Esophagus squamous epithelium (tissue), 5 donors: ENCODE measurements at regions of chr1 and their contacts with region 1.

Region 1: GRCh38 chr1:24830680-24831272 is 85.5 kb downstream of the CLIC4 start:
- DNase-seq: no peak
- H3K4me3 ChIP-seq: no peak overlapping the region
- H3K27ac ChIP-seq: no peak overlapping the region
- H3K4me1 ChIP-seq: peaks cover 0 to 60% (median 19%) of the 10 kb centered on the region in 3 donors
- H3K27me3 ChIP-seq: no peaks in the 10 kb centered on the region
- CTCF ChIP-seq: peak; percentile 54 to 84 (median 76)
- POLR2A ChIP-seq: no peak

Region 2: DNA sequence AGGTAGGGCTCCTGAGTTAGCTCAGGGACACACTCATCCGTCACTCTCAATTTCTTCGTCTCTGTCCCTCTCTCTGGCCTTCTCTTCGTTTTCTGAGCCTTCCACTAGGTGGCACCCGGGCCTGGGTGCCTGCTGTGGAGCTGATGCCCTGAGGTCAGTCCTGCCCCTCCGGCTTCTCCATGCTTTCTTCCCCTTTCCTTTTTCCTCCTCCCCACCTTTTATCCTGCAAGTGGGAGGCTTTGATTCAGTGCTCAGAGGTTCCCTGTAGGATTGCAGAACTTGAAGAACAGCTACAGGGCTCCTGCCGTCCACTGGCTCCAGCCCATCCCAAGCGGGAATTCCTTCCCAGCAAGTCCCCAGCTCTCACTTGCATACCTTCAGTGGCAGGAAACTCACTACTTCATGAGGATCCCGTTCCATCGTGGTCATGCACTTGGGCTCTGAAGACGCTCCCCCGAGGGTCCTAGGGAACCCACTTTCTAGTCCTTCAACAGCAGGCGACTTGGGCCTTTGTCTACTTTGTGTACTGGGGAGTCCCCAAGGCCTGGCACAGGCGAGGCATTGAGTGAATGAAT is 142.1 kb before region 1 on chr1:
- intact Hi-C with region 1: loop called (anchors 5 kb)
- DNase-seq: no peak
- H3K4me3 ChIP-seq: no peak overlapping the region
- H3K27ac ChIP-seq: no peak overlapping the region
- H3K4me1 ChIP-seq: peaks cover 0 to 12% (median 0%) of the 10 kb centered on the region in 3 donors
- H3K27me3 ChIP-seq: no peaks in the 10 kb centered on the region
- CTCF ChIP-seq: peak; percentile 61 to 86 (median 81)
- POLR2A ChIP-seq: no peak

Region 3: DNA sequence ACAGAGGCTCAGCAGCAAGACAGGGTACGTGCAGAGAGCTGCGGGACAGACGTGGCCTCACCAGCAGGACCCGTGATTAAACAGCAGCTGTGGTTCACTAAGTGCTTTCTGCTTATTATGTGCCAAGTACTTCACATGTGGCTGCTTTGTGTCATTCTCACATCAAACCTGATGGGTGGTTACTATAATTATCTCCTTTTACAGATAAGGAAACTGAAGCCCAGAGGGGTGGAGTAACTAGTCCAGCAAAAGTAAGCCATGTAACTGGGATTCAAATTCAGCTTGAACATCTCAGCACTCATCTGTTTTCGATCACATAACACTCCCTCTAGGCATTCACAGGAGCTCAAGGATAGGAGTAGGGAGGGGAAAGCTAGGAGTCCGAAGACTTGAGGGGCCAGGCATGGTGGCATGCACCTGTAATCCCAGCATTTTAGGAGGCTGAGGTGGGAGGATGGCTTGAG is 136.4 kb before region 1 on chr1:
- intact Hi-C with region 1: loop called (anchors 5 kb)
- DNase-seq: no peak
- H3K4me3 ChIP-seq: peak overlapping the region in 1 of 4 donors; percentile 8
- H3K27ac ChIP-seq: peak overlapping the region in 2 of 4 donors; percentile 9 to 28
- H3K4me1 ChIP-seq: peaks cover 0 to 19% (median 5%) of the 10 kb centered on the region in 3 donors
- H3K27me3 ChIP-seq: no peaks in the 10 kb centered on the region
- CTCF ChIP-seq: no peak
- POLR2A ChIP-seq: no peak

Region 4: DNA sequence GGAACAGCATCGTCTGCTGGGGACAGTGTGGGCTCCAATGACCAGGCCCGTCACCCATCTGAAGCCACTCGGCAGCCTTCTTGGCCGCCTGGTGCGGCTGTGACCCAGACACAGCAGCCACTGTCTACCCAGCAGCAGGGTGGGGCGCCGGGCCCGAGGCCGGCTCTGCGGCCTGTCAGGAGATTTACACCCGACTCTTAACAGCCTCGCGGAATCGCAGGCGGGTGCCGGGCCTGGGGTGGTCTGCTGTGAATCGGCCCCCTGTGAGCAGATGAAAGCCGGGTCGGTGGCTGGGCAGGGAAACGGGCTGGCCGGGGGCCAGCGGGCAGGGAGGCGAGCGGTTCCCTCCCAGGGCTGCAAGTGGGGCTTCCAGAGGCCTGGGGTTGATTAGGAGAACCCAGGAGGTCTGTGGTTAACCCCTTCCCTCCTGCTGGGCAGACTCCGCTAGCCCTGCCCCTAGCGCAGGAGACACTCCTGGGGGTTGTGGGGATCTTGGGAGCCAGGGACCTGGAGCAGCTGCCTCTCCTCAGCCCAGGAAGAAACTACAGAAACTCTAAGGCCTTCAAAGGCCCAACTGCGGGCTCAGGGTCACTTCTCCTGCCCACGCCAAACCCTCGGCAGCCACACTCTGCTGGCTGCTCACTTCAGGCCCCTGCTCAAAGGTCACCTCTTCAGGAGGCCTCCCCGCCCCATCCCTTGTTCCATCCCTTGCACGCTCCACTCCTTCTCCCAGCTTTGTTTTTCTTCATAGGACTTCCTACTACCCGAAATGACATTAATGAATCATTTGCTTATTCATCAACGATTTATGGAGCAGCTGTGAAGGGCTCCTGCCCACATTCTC is 83.7 kb after region 1 on chr1:
- intact Hi-C with region 1: no loop called
- DNase-seq: no peak
- H3K4me3 ChIP-seq: no peak overlapping the region
- H3K27ac ChIP-seq: no peak overlapping the region
- H3K4me1 ChIP-seq: peaks cover 0 to 18% (median 0%) of the 10 kb centered on the region in 3 donors
- H3K27me3 ChIP-seq: peaks cover 0 to 22% (median 0%) of the 10 kb centered on the region in 4 donors
- CTCF ChIP-seq: no peak
- POLR2A ChIP-seq: no peak

Region 5: GRCh38 chr1:24987875-24988557 is 157.2 kb after region 1 on chr1:
- intact Hi-C with region 1: no loop called
- DNase-seq: no peak
- H3K4me3 ChIP-seq: no peak overlapping the region
- H3K27ac ChIP-seq: no peak overlapping the region
- H3K4me1 ChIP-seq: no peaks in the 10 kb centered on the region
- H3K27me3 ChIP-seq: peaks cover 0 to 36% (median 0%) of the 10 kb centered on the region in 4 donors
- CTCF ChIP-seq: no peak
- POLR2A ChIP-seq: no peak